Activated CD4-positive, alpha-beta T cell treated with anti-CD3 and anti-CD28 coated beads for 36 hours (primary cell): ENCODE measurements at regions of chr6 and their contacts with region 1.

Region 1: GRCh38 chr6:7389451-7390225 is at the starts of genes CAGE1 and RIOK1:
- DNase-seq: peak; percentile 97
- ATAC-seq: peak; percentile 96
- H3K4me3 Mint-ChIP-seq: peak within 1 kb of the TSS; percentile 88
- H3K27ac Mint-ChIP-seq: peak within 1 kb of the TSS; percentile 99
- H3K4me1 Mint-ChIP-seq: peaks cover 42% of the 10 kb centered on the region
- H3K27me3 Mint-ChIP-seq: no peaks in the 10 kb centered on the region
- total RNA-seq, gene CAGE1: 0.07 to 0.09 TPM
- total RNA-seq, gene RIOK1: 37.3 to 39.6 TPM

Region 2: GRCh38 chr6:7196019-7196402 is 193.6 kb before region 1 on chr6:
- CTCF ChIA-PET with region 1: no interaction called
- POLR2A ChIA-PET with region 1: interaction called, 13 read pairs
- intact Hi-C with region 1: no loop called
- DNase-seq: peak; percentile 43
- ATAC-seq: peak; percentile 81
- H3K4me3 Mint-ChIP-seq: peak overlapping the region; percentile 24
- H3K27ac Mint-ChIP-seq: peak overlapping the region; percentile 64
- H3K4me1 Mint-ChIP-seq: peaks cover 31% of the 10 kb centered on the region
- H3K27me3 Mint-ChIP-seq: no peaks in the 10 kb centered on the region

Region 3: GRCh38 chr6:7276199-7276524 is 113.5 kb before region 1 on chr6:
- CTCF ChIA-PET with region 1: interaction called, 4 read pairs
- POLR2A ChIA-PET with region 1: no interaction called
- intact Hi-C with region 1: loop called (anchors 1 to 5 kb)
- DNase-seq: no peak
- ATAC-seq: no peak
- H3K4me3 Mint-ChIP-seq: no peak overlapping the region
- H3K27ac Mint-ChIP-seq: no peak overlapping the region
- H3K4me1 Mint-ChIP-seq: peaks cover 5% of the 10 kb centered on the region
- H3K27me3 Mint-ChIP-seq: no peaks in the 10 kb centered on the region

Region 4: DNA sequence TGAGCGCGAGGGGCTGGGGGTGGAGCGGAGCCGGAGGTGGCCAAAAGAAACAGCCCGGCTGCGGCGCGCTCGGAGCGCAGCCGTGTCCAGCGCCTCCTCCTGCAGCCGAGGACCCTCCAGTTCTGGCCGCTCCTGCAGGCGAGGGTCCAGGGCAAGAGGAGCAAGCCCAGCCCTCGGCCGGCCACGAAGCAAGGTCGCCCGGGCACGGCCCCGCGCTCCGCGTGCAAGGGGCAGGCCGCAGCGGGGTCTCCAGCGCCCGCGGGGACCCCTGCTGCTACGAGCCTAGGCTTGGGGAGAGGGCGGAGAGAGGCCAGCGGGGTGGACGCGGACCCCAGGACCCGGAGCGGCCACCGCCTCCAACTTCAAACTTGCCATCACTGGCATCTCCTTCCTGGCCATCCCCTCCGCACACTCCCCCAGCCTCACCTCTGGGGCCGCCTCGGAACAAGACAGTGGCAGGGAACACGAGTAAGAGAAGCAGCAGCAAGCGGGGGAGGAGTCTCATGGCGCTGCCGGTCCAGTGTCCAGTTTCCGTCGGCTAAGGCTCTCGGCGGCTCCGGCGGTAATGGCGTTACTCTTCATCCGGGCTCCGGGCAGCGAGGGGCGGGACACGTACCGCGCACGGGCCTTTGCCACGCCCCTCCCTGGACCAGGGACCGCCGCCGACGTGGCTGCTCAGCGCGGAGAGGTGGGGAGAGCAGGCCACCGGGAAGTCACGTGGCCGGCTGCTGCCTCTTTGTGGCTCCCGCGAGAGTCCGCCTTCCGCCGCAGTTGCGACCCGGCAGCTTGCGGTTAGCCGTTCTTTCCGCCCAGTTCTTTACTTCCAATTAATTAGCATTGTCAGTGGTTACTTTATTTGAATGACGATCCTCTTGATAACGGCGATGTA is 76.8 kb before region 1 on chr6 and contains the start of gene SSR1:
- CTCF ChIA-PET with region 1: interaction called, 3 read pairs
- POLR2A ChIA-PET with region 1: interaction called, 9 read pairs
- intact Hi-C with region 1: loop called (anchors 1 kb)
- DNase-seq: peak; percentile 97
- ATAC-seq: peak; percentile 97
- H3K4me3 Mint-ChIP-seq: peak within 1 kb of the TSS; percentile 99
- H3K27ac Mint-ChIP-seq: peak within 1 kb of the TSS; percentile 98
- H3K4me1 Mint-ChIP-seq: peaks cover 45% of the 10 kb centered on the region
- H3K27me3 Mint-ChIP-seq: no peaks in the 10 kb centered on the region
- total RNA-seq, gene SSR1: 129 to 165 TPM

Region 5: DNA sequence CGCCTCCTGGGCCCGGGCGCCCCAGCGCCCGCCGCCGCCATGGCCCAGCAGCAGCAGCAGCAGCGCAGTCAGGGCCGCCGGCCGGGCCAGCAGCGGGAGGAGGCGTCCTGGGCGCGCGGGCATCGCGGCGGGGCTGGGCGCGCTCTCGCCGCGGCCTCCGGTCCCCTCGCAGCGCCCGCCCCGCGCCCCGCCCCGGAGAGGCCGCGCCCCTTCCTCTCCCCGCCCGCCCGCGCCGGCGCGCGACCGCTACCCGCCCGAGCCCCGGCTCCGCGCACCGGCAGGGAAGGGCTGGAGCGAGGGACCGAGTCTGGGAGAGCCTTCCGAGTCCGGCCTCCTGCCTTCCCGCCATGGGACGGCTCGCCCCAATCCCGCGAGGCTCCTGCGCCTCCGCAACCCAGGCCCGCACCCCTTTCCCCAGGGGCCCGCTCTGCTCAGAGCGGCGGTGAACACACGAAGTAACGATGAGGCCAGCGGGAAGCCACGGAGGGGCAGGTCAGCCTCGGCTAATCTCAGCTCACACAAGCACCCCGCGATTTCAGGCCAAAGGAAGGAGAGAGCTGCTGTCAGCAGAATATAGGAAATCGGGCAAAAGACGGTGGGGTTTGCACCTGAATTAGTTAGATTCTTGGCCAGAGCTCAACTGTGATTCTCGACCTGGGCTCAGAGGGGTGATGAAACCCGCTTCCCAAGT is 521.2 kb after region 1 on chr6 and contains the start of gene TXNDC5:
- CTCF ChIA-PET with region 1: no interaction called
- POLR2A ChIA-PET with region 1: no interaction called
- intact Hi-C with region 1: loop called in 1 of 2 experiments (anchors 1 kb)
- DNase-seq: peak; percentile 83
- ATAC-seq: peak; percentile 87
- H3K4me3 Mint-ChIP-seq: peak within 1 kb of the TSS; percentile 91
- H3K27ac Mint-ChIP-seq: peak within 1 kb of the TSS; percentile 76
- H3K4me1 Mint-ChIP-seq: peaks cover 15% of the 10 kb centered on the region
- H3K27me3 Mint-ChIP-seq: no peaks in the 10 kb centered on the region
- total RNA-seq, gene TXNDC5: 44.4 to 52.8 TPM

Region 6: GRCh38 chr6:8102122-8102958 is 712.7 kb after region 1 on chr6 and contains the start of gene EEF1E1:
- CTCF ChIA-PET with region 1: no interaction called
- POLR2A ChIA-PET with region 1: no interaction called
- intact Hi-C with region 1: loop called in 1 of 2 experiments (anchors 1 kb)
- DNase-seq: peak; percentile 99
- ATAC-seq: peak; percentile 98
- H3K4me3 Mint-ChIP-seq: peak within 1 kb of the TSS; percentile 88
- H3K27ac Mint-ChIP-seq: peak within 1 kb of the TSS; percentile 96
- H3K4me1 Mint-ChIP-seq: peaks cover 24% of the 10 kb centered on the region
- H3K27me3 Mint-ChIP-seq: peaks cover 15% of the 10 kb centered on the region
- total RNA-seq, gene EEF1E1: 73.4 to 74.6 TPM

Region 7: DNA sequence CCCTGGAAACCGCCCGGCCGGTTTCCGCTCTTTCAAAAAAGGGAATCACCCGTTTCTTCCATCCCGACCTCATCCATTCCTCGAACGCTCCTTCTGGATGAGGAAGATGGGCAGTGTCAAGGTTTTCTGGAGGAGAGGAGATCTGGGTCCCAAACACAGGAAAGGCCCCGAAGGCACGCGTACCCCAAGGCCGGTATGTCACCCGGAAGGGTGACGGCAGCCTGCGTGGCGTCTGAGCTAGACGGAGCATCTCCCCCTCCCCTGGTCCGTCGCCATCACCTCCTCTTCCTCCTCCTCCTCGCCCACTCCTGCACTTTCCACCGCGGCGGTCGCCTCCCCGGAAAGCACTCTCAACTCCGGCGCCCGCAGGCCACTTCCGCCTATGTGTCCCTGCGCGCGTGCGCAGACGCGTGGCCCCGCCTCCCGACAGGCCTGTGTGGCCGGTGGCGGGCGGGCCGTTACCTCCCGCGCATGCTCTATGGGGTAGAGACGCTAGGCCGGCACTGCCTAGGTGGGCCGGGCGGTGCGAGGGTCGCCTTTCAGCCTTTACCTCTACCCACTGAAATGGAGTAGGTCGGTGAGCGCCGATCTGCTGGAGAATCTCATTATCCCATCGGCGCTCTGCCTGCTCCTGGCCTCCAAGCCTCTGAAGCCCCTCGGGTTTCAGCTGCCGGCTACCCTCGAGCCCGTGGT is 1045.7 kb after region 1 on chr6 and contains the start of gene SLC35B3:
- CTCF ChIA-PET with region 1: no interaction called
- POLR2A ChIA-PET with region 1: no interaction called
- intact Hi-C with region 1: loop called in 1 of 2 experiments (anchors 1 kb)
- DNase-seq: peak; percentile 99
- ATAC-seq: peak; percentile 95
- H3K4me3 Mint-ChIP-seq: peak within 1 kb of the TSS; percentile 92
- H3K27ac Mint-ChIP-seq: peak within 1 kb of the TSS; percentile 95
- H3K4me1 Mint-ChIP-seq: peaks cover 38% of the 10 kb centered on the region
- H3K27me3 Mint-ChIP-seq: no peaks in the 10 kb centered on the region
- total RNA-seq, gene SLC35B3: 4.9 to 6.7 TPM